ENCODE measurements at regions of chrX and their contacts with region 1.

Region 1: GRCh38 chrX:136168929-136169735 is 21.8 kb downstream of the FHL1 start:
- DNase-seq: peak; percentile 65
- ATAC-seq: peak; percentile 82

Region 2: DNA sequence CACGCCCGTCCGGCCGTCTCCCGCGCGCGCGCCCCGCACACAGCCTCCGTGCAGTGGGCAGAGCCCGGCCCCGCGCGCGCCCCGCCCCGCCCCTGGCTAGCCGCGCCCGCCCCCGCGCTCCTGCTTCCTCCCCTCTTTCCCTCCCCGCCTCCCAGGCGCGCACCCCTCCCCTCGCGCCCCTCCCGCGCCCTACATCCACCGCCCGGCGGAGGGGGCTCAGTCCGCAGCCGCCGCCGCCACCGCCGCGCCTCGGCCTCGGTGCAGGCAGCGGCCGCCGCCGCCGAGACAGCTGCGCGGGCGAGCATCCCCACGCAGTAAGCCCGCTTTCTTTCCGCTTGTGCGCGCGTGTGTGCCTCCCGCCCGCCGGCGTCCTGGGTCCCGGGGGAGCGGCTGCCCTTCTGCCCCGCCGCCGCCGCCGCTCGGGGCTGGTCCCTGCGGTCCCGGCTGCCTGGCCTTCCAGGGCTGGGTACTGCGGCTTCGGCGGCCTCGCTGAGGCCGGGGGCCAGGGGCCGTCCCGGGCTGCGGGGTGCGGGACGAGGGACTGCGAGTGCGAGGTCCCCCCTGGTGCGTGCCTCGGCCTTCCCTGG is 21.7 kb before region 1 on chrX and contains the start of gene FHL1:
- intact Hi-C with region 1: loop called (anchors 2 kb)
- DNase-seq: peak; percentile 79
- ATAC-seq: peak; percentile 93
- total RNA-seq, gene FHL1: 1,876 TPM

Region 3: GRCh38 chrX:136198010-136198409 is 28.9 kb after region 1 on chrX:
- intact Hi-C with region 1: loop called (anchors 1 kb)
- DNase-seq: no peak
- ATAC-seq: no peak

Region 4: DNA sequence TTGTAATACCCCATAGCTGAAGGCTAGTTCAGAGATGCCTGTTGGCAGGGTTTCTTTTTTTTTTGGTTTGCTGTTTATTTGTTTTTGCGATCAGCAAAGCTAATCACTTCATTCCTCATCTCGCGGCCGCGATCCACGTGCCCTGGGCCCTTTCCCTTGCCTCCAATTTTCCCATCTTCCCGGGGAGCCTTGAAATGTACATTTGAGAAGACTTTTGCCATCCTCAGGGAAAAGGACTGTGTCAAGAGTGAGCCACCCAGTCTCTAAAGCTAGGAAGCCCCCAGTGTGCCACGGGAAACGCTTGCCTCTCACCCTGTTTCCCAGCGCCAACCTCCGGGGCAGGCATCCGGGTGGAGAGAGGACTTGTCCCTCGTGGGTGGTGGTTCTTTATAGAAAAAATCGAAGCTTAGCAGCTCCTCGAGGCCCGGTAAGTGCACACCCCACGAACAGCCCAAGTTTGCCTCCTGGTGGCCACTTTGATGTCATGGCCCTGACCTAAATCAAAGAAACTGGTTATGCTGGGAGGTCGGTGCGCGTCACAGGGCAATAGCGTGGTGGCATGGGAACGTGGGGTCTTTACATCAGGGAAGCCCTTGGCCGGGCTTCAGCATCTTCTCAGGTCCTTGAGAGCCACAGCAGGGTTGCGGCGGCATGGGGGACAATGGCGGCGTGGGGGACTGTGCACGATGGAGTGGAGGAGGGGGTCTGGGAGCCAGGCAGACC is 40.0 kb after region 1 on chrX:
- intact Hi-C with region 1: loop called (anchors 2 kb)
- DNase-seq: peak; percentile 73
- ATAC-seq: peak; percentile 54

Region 5: DNA sequence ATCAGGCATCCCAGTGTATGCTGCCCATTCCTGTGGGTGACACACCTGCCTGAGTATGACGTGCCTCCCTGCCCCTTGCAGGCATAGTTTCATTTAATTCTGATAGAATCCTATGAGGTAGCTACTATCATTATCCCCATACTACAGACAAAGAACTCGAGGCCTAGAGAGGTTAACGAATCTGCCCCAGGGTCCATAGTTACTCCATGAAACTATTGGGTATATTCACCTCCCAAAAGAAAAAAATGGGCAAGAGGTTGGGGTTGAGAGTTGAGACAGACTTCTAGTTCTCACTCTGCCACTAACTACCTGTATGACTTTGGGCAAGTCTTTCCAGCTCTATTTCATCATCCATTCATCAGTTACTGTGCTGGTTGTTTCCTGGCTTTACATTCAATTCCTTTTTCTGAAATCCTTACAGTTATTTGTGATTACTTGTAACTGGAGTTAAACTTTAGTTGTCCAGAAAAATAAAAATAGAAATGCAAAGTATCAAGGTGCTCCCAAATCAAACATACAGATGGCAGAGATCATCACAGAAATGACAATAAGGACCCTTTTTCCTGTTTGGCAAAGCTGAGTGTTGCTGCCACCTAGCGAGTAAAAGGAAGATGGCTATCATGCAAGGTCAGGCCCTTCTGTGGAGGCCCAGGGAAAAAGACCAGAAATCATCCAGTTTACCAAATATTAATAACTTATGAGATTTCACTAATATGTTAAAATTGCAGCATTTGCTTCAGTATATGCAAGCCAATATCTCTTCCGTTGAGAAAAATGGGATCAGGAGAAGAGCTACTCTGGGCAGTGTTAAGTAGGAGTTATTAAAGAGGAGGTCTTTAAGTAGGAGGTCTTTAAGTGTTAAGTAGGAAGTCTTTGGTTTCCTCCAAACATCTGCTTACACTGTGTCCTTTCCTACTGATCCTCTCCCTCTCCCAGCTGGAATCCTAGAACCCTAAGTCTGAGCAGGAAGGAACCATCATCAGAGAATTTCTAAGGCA is 99.2 kb after region 1 on chrX:
- intact Hi-C with region 1: loop called (anchors 1 kb)
- DNase-seq: no peak
- ATAC-seq: no peak

Region 6: DNA sequence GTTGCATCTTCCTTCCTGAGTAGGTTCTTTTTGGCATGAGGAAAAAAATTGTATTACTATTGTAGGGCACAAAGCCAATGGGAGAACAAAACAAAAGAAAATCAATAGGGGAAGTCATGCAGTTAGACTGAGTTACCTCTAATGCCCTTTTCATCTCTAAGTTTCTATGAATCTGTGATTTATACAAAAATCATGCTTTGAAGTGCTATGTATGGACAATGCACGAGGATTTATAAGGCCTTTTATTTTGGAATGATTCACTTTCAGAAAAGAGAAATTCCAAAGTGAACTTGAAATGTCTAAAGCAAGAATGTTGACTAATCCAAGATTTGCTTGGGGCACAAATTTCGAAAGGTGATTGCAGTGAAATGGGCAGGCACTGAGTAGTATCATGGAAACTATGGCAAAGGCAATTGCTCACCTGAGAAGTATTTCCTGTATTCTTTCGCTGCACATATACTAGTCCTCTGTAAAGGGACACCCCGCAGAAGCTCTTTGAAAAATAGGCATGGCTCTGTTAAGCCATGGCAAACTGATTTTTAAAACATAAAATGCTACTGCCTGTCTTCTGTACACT is 184.5 kb after region 1 on chrX:
- intact Hi-C with region 1: no loop called
- DNase-seq: no peak
- ATAC-seq: no peak

Measured in Right ventricle myocardium inferior (tissue), 1 donor.